ENCODE measurements at regions of chr9 and their contacts with region 1.

Region 1: GRCh38 chr9:101601904-101602765 is 7.4 kb upstream of the PPP3R2 start:
- DNase-seq: peak; percentile 66
- H3K4me3 Mint-ChIP-seq: no peak overlapping the region
- H3K27ac Mint-ChIP-seq: no peak overlapping the region
- H3K4me1 Mint-ChIP-seq: peaks cover 2% of the 10 kb centered on the region
- H3K27me3 Mint-ChIP-seq: peaks cover 24% of the 10 kb centered on the region

Region 2: GRCh38 chr9:101727612-101728524 is 125.7 kb after region 1 on chr9:
- intact Hi-C with region 1: loop called (anchors 5 kb)
- DNase-seq: peak; percentile 59
- H3K4me3 Mint-ChIP-seq: no peak overlapping the region
- H3K27ac Mint-ChIP-seq: no peak overlapping the region
- H3K4me1 Mint-ChIP-seq: no peaks in the 10 kb centered on the region
- H3K27me3 Mint-ChIP-seq: peaks cover 6% of the 10 kb centered on the region

Region 3: DNA sequence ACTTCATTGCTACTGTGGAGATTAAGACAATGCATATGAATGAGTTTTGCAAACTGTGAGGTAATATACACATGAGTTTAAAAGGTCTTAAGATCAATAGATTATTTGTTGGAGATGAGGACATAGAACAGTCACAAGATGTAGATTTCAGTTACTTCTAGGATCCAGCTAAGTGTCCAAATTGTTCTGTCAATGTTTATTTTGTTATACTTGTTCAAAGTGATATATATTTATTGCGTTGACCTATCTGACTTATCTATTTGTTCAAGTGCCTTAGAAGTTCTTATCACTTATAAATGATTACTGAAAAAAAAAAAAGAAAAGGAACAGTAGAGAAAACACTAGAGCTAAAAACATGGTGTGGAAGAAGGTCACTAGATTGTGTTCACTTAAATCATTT is 211.9 kb after region 1 on chr9:
- intact Hi-C with region 1: no loop called
- DNase-seq: no peak
- H3K4me3 Mint-ChIP-seq: no peak overlapping the region
- H3K27ac Mint-ChIP-seq: no peak overlapping the region
- H3K4me1 Mint-ChIP-seq: no peaks in the 10 kb centered on the region
- H3K27me3 Mint-ChIP-seq: no peaks in the 10 kb centered on the region

Measured in activated CD4-positive, alpha-beta T cell treated with anti-CD3 and anti-CD28 coated beads, Interleukin-2, amount 10 ng/mL, durations not matched to agents 24 days and 14 days (primary cell).